Activated T-helper 1 cell treated with anti-CD3 and anti-CD28 coated beads, Interleukin-12 subunit alpha, Interleukin-12 subunit beta, Interleukin-2, Interleukin-4 antibody, amounts not matched to agents 30 ng/mL and 10 ng/mL and 1 ng/mL, durations not matched to agents 14 hours and 24 hours and 36 hours (primary cell): ENCODE measurements at regions of chr3 and their contacts with region 1.

Region 1: DNA sequence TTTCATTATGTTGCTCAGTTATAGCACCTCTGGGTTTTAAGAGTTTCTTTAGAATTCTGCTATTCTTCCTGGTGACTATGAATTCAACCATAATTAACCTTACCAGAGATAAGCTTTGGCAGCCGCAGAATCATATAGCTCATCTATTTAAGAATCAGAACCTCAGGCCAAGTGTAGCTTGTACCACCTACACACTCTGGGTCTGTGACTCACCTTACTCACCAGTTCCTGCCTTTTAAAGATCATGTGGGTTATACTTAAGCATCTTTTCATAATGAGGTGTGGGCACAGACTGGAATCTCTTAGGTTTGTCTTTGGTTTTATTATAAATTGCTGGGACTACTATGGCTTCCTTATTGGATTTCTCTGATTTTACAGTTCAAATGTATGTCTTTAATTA is 21.9 kb downstream of the CDV3 start:
- DNase-seq: no peak
- H3K4me3 Mint-ChIP-seq: peak overlapping the region; percentile 1
- H3K27ac Mint-ChIP-seq: peak overlapping the region; percentile 20
- H3K4me1 Mint-ChIP-seq: peaks cover 25% of the 10 kb centered on the region
- H3K27me3 Mint-ChIP-seq: no peaks in the 10 kb centered on the region

Region 2: GRCh38 chr3:133448478-133449122 is 146.7 kb before region 1 on chr3:
- intact Hi-C with region 1: loop called (anchors 1 kb)
- DNase-seq: peak; percentile 22
- H3K4me3 Mint-ChIP-seq: peak overlapping the region; percentile 34
- H3K27ac Mint-ChIP-seq: peak overlapping the region; percentile 80
- H3K4me1 Mint-ChIP-seq: peaks cover 34% of the 10 kb centered on the region
- H3K27me3 Mint-ChIP-seq: peaks cover 2% of the 10 kb centered on the region